A673 (cell line): ENCODE measurements at regions of chr13 and their contacts with region 1.

Region 1: DNA sequence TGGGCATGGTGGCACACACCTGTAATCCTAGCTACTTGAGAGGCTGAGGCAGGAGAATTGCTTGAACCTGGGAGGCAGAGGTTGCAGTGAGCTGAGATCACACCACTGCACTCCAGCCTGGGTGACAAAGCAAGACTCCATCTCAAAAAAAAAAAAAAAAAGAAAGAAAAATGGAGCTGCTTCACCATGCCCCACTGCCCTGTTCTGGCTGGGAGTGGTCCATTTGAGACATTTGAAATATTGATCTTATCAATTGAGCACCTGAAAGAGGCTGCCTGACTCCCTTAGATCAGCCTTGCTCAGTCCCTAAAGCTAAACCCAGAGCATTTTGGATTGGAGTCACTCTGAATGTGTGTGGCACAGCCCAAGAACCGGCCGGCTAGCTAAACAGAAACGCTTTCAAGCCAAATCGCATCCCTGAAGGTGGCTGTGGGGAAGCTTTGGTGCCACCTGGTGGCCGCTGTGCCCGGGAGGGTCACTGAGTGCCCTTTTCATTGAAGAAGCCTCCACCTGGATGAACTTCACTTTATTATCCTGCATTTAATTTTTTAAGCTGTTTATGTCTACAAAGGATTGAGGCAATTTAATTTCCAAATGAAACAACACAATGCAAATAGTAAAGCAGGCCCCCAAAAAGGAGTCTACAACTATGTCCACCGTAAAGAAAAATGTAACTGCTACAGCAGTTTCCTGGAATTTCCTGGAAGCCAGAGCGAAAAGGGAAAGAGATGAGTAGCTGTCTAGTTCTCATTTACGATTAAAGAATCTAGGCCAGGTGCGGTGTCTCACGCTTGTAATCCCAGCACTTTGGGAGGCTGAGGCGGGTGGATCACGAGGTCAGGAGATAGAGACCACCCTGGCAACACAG is 53.1 kb upstream of the SERPINE3 start:
- DNase-seq: peak; percentile 80
- H3K4me3 ChIP-seq: no peak overlapping the region
- H3K27ac ChIP-seq: no peak overlapping the region
- H3K4me1 ChIP-seq: no peaks in the 10 kb centered on the region
- H3K27me3 ChIP-seq: no peaks in the 10 kb centered on the region
- CTCF ChIP-seq: peak; percentile 95

Region 2: DNA sequence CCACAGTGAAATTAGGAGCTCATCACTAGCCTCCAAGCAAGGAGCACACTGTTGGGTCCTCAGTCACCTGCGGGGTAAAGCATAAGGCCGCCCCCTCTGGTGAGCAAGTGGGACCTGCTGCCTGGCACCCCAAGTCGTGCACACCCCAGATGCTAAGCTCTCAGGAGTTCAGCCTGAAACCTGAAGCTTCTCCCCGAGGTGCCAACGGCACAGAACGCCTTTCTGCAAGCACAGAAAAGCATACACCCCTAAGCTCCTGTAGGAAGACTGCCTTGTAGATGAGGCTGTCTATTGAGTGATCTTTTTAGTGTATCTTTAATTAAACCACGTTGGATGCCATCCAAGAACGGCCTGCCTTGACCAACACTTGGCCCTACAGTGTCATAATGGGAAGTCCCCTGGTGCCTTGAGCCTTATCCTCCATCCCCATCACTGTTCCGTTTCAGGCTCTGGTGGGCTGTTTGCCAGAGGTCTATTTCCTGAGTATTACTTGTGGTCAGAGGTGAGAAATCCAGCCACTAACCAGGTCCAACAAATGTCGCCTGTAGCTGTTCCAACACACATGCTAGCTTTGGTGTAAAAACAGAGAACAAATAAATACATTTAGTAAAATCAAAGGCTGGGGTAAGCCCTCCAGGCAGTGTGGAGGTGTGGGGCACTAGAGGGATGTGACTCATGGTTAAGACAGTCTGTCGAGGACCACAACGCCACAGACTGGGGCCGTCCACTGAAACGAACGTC is 220.1 kb before region 1 on chr13:
- CTCF ChIA-PET with region 1: no interaction called
- POLR2A ChIA-PET with region 1: no interaction called
- intact Hi-C with region 1: no loop called
- DNase-seq: no peak
- H3K4me3 ChIP-seq: no peak overlapping the region
- H3K27ac ChIP-seq: no peak overlapping the region
- H3K4me1 ChIP-seq: no peaks in the 10 kb centered on the region
- H3K27me3 ChIP-seq: no peaks in the 10 kb centered on the region
- CTCF ChIP-seq: no peak

Region 3: DNA sequence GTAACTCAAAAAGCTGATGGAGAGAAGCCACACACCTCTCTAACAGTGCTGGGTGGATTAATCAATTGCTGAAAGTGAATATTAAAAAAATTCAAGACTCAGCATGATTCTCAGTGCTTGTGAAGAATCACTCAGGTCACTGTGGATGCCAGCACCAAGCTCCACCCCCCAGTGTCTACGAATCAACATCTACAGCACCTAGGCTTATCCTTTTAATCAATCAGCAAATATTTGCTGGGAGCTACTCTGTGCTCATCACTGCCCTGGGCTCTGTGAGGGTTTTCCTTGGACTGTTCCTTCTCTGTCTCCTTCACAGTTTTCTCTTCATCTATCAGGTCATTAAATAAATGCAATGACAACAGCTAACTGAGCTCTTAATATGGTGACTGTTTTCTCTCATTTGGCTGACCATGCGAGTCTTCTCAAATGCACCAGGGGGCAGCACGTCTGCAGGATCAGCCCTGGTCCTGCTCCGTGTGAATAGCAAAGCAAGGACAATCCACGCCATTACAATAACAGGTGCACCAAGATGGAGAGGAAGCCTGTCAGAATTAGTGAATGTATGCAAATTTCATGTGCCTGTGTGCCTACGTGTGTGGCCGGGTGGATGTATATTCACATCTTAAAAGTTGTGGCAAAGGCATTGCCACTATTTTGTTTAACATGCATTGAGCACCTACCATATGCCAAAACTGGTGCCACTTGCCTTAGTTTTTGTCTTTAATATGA is 160.7 kb before region 1 on chr13:
- CTCF ChIA-PET with region 1: interaction called, 51 read pairs
- POLR2A ChIA-PET with region 1: no interaction called
- intact Hi-C with region 1: loop called (anchors 1 kb)
- DNase-seq: peak; percentile 80
- H3K4me3 ChIP-seq: no peak overlapping the region
- H3K27ac ChIP-seq: no peak overlapping the region
- H3K4me1 ChIP-seq: no peaks in the 10 kb centered on the region
- H3K27me3 ChIP-seq: no peaks in the 10 kb centered on the region
- CTCF ChIP-seq: peak; percentile 93

Region 4: DNA sequence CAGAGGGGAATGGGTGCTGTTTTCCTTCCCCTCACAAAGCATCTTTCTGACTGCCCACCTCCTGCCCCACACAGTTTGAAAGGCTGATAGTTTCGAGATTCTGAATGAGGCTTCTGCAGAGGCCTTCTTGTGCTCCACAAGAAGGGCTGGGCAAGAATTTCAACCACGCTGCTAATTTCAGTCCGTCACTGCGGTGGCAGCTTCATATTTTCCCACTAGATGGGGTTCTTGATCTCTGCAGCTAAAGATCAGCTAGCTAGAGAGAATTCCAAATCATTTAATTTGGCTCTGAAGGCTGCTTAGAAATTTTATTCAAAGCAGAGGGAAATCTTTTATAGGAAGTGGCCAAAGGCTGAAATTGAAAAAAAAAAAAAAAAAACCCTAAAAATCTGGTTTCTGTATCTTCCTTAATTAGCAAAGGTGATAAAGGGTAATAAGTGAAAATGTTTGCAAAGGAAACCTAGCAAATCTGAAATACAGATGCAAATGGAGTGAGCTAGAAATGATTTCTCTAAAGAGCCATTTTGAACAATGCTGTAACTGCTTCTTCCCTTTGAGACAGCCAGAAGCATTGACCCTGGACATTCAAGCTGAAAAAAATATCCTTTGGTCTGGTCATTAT is 137.3 kb before region 1 on chr13:
- CTCF ChIA-PET with region 1: interaction called, 49 read pairs
- POLR2A ChIA-PET with region 1: no interaction called
- intact Hi-C with region 1: loop called (anchors 1 kb)
- DNase-seq: peak; percentile 90
- H3K4me3 ChIP-seq: peak overlapping the region; percentile 17
- H3K27ac ChIP-seq: peak overlapping the region; percentile 91
- H3K4me1 ChIP-seq: peaks cover 22% of the 10 kb centered on the region
- H3K27me3 ChIP-seq: no peaks in the 10 kb centered on the region
- CTCF ChIP-seq: peak; percentile 85

Region 5: DNA sequence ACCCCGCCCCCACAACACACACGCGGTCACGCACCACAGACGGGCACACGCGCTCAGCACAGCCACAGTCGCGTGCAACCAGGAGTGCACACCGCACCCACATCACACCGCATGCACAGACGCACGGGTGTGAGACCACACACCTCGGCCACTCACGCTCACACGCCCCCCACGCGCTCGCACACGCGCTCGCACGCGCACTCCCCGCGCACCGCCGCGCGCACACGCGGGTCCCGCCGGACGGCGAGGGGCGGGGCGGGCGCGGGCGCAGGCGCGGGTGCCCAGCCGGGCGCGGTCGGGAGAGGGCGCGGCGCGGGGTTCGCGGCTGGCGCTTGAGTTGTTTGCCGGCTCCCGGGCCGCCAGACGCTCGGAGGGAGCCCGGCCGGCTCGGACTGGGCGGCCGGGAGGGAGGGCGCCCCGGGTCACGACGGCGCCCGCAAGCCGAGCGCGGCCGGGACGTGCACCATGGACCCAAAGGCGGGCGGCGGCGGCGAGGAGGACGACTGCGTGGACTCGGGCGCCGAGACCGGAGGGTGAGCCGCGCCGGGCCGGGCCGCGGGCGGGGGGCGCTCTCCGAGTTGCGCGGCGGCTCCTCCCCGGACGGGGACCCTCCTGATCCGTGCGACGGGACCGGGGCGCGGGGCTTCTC is 64.2 kb before region 1 on chr13 and contains the start of gene FAM124A:
- CTCF ChIA-PET with region 1: interaction called, 5 read pairs
- POLR2A ChIA-PET with region 1: no interaction called
- intact Hi-C with region 1: loop called (anchors 5 kb)
- DNase-seq: peak; percentile 71
- H3K4me3 ChIP-seq: peak within 1 kb of the TSS; percentile 64
- H3K27ac ChIP-seq: peak within 1 kb of the TSS; percentile 44
- H3K4me1 ChIP-seq: peaks cover 16% of the 10 kb centered on the region
- H3K27me3 ChIP-seq: peaks cover 4% of the 10 kb centered on the region
- CTCF ChIP-seq: no peak
- total RNA-seq, gene FAM124A: 2.1 and 2.2 TPM in 2 replicates

Region 6: GRCh38 chr13:51230477-51231105 is 55.8 kb before region 1 on chr13:
- CTCF ChIA-PET with region 1: no interaction called
- POLR2A ChIA-PET with region 1: no interaction called
- intact Hi-C with region 1: loop called (anchors 5 kb)
- DNase-seq: peak; percentile 44
- H3K4me3 ChIP-seq: peak overlapping the region; percentile 11
- H3K27ac ChIP-seq: no peak overlapping the region
- H3K4me1 ChIP-seq: peaks cover 14% of the 10 kb centered on the region
- H3K27me3 ChIP-seq: no peaks in the 10 kb centered on the region
- CTCF ChIP-seq: no peak

Region 7: DNA sequence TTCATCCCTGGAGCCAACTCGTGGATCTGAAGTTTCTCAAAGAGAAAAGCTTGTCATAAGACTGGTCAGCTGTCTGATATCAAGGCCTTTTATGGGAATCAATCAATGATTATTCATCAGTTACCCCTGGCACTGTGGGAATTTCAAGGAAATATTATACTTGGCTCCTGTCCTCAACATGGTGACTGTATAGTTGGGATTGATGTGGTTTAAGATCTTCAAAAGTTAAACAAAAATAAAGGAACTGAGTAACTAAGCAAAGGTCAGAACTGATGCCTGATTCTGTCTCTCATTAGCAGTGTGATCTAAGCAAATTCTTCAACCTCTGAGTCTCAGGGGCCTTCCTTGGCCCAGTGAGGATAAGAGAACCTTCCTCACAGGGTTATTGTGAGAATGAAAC is 30.9 kb after region 1 on chr13:
- CTCF ChIA-PET with region 1: no interaction called
- POLR2A ChIA-PET with region 1: no interaction called
- intact Hi-C with region 1: no loop called
- DNase-seq: no peak
- H3K4me3 ChIP-seq: no peak overlapping the region
- H3K27ac ChIP-seq: no peak overlapping the region
- H3K4me1 ChIP-seq: peaks cover 22% of the 10 kb centered on the region
- H3K27me3 ChIP-seq: no peaks in the 10 kb centered on the region
- CTCF ChIP-seq: no peak